ENCODE measurements at regions of chr10 and their contacts with region 1.

Region 1: DNA sequence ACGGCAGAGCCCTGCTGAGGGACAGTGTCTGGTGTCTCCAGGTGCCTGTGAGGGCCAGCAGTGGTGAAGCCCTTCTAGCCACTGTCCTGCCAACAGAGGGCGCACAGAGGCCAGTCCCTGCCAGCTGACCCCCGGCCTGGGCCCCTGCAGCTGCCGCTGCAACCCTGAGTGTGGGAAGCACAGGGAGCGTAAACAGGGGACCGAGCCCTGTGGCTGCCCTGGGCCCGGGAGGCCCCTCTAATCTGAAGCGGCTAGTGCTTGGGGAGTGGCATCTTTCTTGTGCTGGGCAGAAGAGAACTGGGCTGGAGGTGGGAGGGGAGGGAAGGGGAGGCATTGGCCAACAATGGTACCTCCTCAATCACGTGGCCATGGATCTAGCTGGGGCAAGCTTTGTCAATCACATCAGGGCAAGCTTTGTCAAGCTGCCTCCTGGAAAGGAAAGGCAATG is 34.6 kb downstream of the TRIM8 start:
- DNase-seq: peak; percentile 92
- ATAC-seq: peak; percentile 85
- H3K4me3 Mint-ChIP-seq: peak overlapping the region; percentile 27
- H3K27ac Mint-ChIP-seq: peak overlapping the region; percentile 94
- H3K4me1 Mint-ChIP-seq: peaks cover 61% of the 10 kb centered on the region
- H3K27me3 Mint-ChIP-seq: no peaks in the 10 kb centered on the region
- CTCF ChIP-seq: no peak; the same call in 1 of the 2 replicates

Region 2: DNA sequence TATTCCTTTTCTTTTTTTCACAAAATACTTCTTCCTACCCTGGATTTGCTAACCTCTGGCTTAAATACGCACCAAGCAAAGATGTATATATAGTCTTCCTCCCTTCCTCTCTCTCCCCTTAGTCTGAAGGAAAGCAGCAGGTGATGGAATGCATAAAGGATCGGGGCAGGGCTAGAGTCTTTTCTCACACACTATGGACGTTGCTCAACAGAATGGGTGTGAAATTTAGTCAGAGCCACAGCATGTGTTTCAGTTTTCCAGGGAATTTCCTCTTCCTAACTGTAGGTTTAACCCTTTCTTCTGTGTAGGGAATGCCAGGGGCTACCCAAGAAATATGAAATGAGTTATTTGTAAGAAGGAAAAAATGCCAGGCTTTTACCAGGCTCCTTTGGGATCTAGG is 354.8 kb before region 1 on chr10:
- CTCF ChIA-PET with region 1: no interaction called
- POLR2A ChIA-PET with region 1: no interaction called
- DNase-seq: no peak
- ATAC-seq: peak; percentile 66
- H3K4me3 Mint-ChIP-seq: no peak overlapping the region
- H3K27ac Mint-ChIP-seq: no peak overlapping the region
- H3K4me1 Mint-ChIP-seq: peaks cover 6% of the 10 kb centered on the region
- H3K27me3 Mint-ChIP-seq: peaks cover under 1% of the 10 kb centered on the region; the same call in 1 of the 2 replicates
- CTCF ChIP-seq: no peak

Region 3: GRCh38 chr10:102503281-102504220 is 175.3 kb before region 1 on chr10 and contains the start of gene SUFU:
- CTCF ChIA-PET with region 1: interaction called, 17 read pairs
- POLR2A ChIA-PET with region 1: no interaction called
- DNase-seq: peak; percentile 98
- ATAC-seq: peak; percentile 74
- H3K4me3 Mint-ChIP-seq: peak within 1 kb of the TSS; percentile 95
- H3K27ac Mint-ChIP-seq: peak within 1 kb of the TSS; percentile 41; the same call in 1 of the 2 replicates
- H3K4me1 Mint-ChIP-seq: peaks cover 8% of the 10 kb centered on the region; the same call in 1 of the 2 replicates
- H3K27me3 Mint-ChIP-seq: peaks cover 12% of the 10 kb centered on the region
- CTCF ChIP-seq: peak; percentile 70
- total RNA-seq, gene SUFU: 11.6 to 13.1 TPM (median 12.8 TPM) in 3 replicates

Region 4: DNA sequence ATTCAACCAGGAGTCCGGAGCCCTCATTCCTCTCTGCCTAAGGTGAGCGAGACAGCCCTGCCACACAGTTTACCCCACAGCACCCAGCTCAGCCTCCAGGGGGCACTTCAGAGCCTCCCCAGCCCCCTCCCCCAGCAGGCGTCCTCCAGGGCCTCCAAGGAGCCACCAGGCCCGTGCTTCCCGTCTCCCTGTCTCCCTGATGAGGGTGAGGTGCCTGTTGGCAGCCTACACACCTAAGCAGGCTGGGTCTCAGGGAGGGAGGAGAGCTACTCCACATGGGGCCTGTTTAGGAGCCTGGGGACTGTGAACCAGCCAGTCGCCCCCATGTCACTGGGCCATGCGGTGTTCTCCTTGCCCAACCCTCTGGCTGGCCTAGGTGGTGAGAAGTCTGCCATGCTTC is 63.5 kb before region 1 on chr10:
- CTCF ChIA-PET with region 1: interaction called, 16 read pairs
- POLR2A ChIA-PET with region 1: no interaction called
- DNase-seq: peak; percentile 77
- ATAC-seq: peak; percentile 86
- H3K4me3 Mint-ChIP-seq: no peak overlapping the region
- H3K27ac Mint-ChIP-seq: no peak overlapping the region
- H3K4me1 Mint-ChIP-seq: peaks cover 8% of the 10 kb centered on the region
- H3K27me3 Mint-ChIP-seq: no peaks in the 10 kb centered on the region
- CTCF ChIP-seq: peak; percentile 43

Region 5: DNA sequence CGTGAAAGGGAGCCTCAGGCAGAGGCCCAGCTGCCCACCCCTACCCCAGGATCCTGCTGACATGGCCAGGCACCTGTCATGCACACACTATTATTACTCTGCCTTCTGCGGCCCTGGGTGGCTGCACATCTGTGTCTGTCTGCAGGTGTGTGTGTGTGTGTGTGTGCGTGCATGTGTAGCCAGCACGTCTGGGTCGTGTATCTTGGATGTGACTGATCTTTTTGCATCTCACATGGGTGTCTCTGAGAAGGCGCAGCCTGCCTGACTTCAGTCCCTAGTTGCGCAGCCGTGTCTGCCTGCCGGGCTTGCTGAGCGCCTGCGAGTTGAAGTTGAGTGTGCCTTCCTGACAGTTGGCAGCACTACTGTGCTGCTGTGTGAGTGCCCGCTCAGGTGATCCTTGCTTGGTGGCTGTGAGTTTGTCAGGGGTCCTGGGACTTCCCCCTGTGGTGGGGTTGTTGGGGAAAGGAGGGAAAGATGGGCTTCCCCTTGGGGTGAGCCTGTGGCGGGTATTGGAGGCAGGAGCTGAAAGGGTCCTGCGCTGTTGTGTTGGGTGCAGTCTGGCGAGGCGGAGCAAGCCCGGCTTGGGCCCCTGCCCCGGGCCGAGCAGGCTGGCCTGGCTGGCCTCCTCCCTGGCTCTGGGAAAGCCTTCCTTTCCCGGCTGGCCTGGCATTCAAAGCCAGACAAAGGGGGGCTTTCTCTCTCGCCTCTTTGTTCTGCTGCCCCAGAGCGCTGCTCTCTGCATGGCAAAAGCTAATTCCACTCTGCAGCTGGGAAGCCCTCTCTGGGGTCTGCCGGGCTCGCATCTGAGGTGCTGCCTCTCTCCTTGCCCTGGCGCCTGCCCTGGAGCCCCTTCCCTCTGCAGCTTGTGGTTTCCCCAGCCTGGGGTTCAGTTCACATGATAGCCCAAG is 29.7 kb before region 1 on chr10:
- CTCF ChIA-PET with region 1: interaction called, 27 read pairs
- POLR2A ChIA-PET with region 1: interaction called, 6 read pairs
- DNase-seq: no peak
- ATAC-seq: peak; percentile 2; the same call in 1 of the 2 replicates
- H3K4me3 Mint-ChIP-seq: peak overlapping the region; percentile 22
- H3K27ac Mint-ChIP-seq: peak overlapping the region; percentile 90
- H3K4me1 Mint-ChIP-seq: peaks cover 59% of the 10 kb centered on the region
- H3K27me3 Mint-ChIP-seq: no peaks in the 10 kb centered on the region
- CTCF ChIP-seq: no peak

Region 6: GRCh38 chr10:102660888-102661657 is 17.8 kb before region 1 on chr10:
- CTCF ChIA-PET with region 1: interaction called, 77 read pairs
- POLR2A ChIA-PET with region 1: interaction called, 3 read pairs
- DNase-seq: no peak
- ATAC-seq: peak; percentile 55
- H3K4me3 Mint-ChIP-seq: no peak overlapping the region
- H3K27ac Mint-ChIP-seq: no peak overlapping the region
- H3K4me1 Mint-ChIP-seq: peaks cover 10% of the 10 kb centered on the region
- H3K27me3 Mint-ChIP-seq: no peaks in the 10 kb centered on the region; the same call in 1 of the 2 replicates
- CTCF ChIP-seq: no peak

Region 7: DNA sequence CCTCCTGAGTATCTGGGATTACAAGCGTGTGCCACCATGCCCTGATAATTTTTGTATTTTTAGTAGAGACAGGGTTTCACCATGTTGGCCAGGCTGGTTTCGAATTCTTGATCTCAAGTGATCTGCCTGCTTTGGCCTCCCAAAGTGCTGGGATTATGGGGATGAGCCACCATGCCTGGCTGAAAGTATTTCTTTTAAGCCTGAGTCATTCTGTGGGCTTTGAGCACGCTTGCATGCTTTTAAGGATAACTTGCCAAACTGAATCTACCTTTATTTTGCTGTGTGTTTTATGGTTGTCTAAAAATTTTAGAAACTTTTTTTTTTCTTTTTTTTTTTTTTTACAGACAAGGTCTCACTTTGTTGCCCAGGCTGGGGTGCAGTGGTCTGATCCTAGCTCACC is 272.4 kb after region 1 on chr10:
- CTCF ChIA-PET with region 1: no interaction called
- POLR2A ChIA-PET with region 1: no interaction called
- DNase-seq: no peak
- ATAC-seq: no peak
- H3K4me3 Mint-ChIP-seq: no peak overlapping the region
- H3K27ac Mint-ChIP-seq: no peak overlapping the region
- H3K4me1 Mint-ChIP-seq: no peaks in the 10 kb centered on the region
- H3K27me3 Mint-ChIP-seq: no peaks in the 10 kb centered on the region
- CTCF ChIP-seq: no peak